Cardiac septum (tissue), 1 donor: ENCODE measurements at regions of chr13 and their contacts with region 1.

Region 1: GRCh38 chr13:75219479-75220237 is 262.3 kb downstream of the TBC1D4 start:
- DNase-seq: peak; percentile 88

Region 2: DNA sequence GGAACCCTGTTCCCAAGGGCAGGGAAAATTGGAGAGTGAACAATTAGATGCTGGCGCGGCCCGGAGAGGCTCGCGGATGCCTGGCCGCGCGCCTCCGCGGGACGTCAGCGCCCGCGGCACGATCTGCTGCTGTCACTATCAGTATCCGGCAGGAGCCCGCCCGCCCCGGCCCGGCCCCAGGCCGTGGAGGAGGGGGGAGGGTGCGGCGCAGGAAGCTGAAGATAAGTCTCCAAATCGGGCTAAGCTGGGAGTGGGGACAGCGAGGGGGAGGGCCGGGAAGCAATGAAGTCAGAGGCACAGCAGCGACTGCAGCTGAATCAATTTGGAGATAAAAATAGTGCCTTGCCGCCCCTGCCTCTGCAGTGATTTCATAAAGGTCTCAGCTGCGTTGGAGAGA is 643.9 kb before region 1 on chr13:
- intact Hi-C with region 1: loop called (anchors 10 kb)
- DNase-seq: peak; percentile 94